Right ventricle myocardium superior (tissue), 1 donor: ENCODE measurements at regions of chr3 and their contacts with region 1.

Region 1: DNA sequence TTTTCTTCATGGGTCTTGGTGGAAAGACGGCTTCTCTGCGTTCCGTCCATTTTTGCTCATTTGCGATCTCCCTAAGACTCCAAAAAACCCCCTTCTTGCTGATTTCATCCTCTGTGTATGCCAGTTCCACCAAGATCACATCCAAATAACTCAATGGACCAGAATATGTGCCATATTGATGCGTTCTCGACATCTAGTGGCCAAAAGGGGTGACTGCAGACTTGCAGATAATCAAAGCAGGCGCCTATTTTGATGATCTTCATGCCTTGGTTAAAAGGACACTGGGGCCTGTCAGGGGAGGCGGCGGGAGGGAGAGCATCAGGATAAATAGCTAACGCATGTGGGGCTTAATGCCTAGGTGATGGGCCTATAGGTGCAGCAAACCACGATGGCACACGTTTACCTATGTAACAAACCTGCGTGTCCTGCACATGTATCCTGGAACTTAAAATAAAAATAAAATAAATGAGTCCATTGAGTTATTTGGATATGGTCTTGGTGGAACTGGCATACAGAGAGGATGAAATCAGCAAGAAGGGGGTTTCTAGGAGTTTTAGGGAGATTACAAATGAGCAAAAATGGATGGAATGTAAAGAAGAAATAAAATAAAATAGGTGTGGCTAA is 104.2 kb upstream of the RAD18 start:
- DNase-seq: no peak
- ATAC-seq: peak; percentile 90

Region 2: DNA sequence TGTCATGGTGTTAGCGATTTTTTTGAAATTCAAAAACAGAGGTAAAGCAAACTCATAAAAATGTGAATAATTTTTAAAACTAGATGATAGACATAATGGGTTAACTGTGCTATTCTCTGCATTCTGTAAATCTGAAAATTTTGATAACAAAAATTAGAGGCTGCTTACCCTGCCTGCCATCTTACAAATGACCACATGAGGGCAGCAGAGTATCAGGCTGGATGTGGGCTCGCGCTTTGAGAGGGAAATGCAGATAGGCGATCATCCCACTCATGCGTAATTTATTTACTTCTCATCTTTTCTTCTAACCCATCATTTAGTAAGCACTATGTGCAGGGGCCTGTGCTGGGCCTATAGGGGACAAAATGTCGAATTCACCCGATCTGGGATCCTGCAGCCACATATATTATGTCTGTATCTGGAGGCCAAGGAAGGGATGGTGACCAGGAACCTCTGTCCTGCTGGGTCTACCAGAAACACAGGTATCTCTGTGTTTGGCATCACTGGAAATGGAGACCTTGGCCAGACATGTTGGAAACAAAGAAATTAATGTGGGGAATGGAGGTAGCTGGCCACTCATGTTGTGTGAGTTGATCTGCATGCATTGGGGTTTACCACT is 96.4 kb before region 1 on chr3:
- intact Hi-C with region 1: loop called (anchors 5 kb)
- DNase-seq: no peak
- ATAC-seq: peak; percentile 84

Region 3: GRCh38 chr3:8987645-8988383 is 79.7 kb before region 1 on chr3:
- intact Hi-C with region 1: loop called (anchors 5 kb)
- DNase-seq: peak; percentile 74
- ATAC-seq: peak; percentile 80

Region 4: DNA sequence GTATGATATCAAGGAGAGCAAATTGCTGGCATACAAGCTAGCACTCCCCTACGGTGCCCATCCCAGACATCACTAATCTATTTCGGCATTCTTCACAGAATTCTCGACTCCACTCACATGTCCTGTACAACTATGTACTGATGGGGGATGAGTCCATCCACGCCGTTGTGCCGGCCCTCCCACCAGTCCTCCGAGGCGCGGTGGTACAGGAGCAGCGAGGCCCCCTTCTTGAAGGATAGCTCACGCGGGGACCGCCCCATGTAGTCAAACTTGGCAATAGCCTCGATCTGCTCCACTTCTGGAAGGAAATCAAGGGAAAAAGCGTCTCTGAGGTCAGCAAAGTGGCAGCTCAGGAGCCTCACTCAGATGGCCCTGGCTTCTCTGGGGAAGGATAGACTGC is 73.2 kb before region 1 on chr3:
- intact Hi-C with region 1: loop called (anchors 2 kb)
- DNase-seq: no peak
- ATAC-seq: no peak